Dendritic cell treated with granulocyte-macrophage colony-stimulating factor and Interleukin-4, amounts not matched to agents 40 ng/mL and 50 ng/mL, for 4 days (primary cell): ENCODE measurements at regions of chr19 and their contacts with region 1.

Region 1: GRCh38 chr19:14136509-14137281 is at the start of gene ASF1B:
- H3K4me3 Mint-ChIP-seq: peak within 1 kb of the TSS; percentile 86
- H3K27ac Mint-ChIP-seq: peak within 1 kb of the TSS; percentile 88
- H3K4me1 Mint-ChIP-seq: peaks cover 34% of the 10 kb centered on the region
- H3K27me3 Mint-ChIP-seq: no peaks in the 10 kb centered on the region

Region 2: DNA sequence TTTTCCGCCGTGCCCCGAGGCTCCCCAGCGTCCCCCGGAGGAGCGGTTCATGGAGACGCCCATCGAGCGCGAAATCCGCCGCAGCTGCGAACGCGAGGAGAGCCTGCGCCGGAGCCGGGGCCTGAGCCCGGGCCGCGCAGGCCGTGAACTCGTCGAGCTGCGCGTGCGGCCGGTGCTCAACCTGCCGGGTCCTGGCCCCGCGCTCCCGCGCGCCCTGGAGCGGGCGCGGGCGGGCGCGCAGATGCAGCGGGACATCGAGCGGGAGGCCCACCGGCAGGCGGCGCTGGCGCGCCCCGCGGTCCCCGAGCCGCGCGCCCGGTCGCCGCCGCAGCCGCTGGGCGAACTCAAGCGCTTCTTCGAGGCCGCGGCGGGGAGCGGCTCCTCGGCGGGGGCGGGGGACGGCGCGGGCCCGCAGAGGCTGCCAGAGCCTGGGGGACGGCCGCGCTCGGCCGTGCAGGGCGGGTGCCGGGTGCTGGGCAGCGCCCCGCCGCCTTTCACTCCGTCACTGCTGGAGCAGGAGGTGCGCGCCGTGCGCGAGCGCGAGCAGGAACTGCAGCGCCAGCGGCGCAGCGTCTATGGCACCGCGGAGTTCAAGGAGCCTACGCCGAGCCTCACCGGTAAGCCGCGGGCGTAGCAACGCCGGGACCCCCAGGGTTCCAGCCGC is 63.3 kb before region 1 on chr19:
- intact Hi-C with region 1: loop called (anchors 2 kb)
- H3K4me3 Mint-ChIP-seq: peak overlapping the region; percentile 100
- H3K27ac Mint-ChIP-seq: peak overlapping the region; percentile 93
- H3K4me1 Mint-ChIP-seq: peaks cover 46% of the 10 kb centered on the region
- H3K27me3 Mint-ChIP-seq: peaks cover 36% of the 10 kb centered on the region

Region 3: DNA sequence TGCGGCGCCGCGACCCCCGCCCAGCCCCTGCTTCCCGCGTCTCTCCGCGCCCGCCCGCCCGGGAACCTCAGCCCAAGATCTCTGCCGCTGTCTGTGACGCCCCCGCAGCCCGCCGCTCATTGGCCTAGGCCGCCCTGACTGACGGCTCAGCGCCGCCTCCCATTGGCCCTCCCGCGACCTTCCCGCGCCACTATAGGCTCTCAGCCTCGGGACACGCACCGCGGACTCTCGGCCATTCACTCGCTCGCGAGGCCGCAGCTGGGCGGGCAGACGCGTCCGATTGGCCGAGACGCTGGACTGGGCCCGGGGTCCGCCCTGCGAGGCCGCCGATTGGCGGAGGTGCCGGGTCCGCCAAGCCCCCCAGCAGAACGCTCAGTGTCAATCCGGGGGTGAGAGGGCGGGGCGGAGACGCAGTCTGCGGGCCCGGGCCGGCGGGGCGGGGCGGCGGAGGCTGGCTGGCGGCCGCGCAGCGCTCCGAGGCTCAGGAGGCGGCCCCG is 19.0 kb before region 1 on chr19 and contains the start of gene PRKACA:
- intact Hi-C with region 1: loop called (anchors 1 kb)
- H3K4me3 Mint-ChIP-seq: peak within 1 kb of the TSS; percentile 92
- H3K27ac Mint-ChIP-seq: peak within 1 kb of the TSS; percentile 93
- H3K4me1 Mint-ChIP-seq: peaks cover 68% of the 10 kb centered on the region
- H3K27me3 Mint-ChIP-seq: no peaks in the 10 kb centered on the region